Tibial artery (tissue), 4 donors: ENCODE measurements at regions of chr10 and their contacts with region 1.

Region 1: DNA sequence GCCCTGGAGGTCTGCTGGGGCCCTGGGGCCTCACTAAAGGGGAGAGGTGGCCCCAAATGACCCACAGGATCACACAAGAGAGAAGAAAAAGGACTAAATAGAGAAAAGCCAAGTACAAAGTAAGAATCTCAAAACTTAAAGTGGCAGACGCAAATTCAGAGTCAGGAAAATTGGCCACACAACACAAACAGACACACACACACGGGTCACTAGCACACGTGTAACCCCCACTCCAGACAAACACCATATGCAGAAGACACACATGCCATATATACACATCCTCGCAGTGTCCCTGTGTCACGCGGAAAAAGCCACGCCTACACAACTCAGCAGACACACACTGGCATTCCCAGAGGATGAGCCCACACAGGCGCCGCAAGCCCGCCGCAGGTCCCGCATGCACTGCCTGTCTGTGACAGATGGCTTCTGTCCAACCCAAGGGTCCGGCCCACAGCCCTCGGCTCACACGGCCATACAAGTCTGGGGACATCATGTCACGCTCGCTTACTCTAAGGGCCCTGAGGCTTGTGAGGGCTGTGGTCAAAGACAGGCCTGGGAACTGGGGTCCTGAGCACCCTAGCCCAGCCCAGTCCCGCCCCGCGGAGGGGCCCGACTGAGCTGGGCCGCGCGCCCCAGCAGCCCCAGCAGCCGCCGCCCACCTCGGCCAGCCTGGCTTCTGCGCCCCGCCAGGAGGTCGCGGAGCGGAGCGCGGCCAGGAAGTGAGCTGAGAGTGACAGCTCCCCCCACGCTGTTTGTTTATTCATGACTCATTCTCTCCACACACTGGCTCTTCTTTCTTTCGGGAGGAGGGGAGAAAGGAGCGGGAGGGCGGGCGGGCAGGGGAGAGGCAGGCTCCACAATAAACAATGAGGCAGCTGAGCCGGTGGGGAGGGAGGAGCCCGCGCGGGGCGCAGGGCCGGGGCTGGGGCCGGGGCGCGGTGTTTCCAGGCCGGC is 95.5 kb upstream of the ZMIZ1 start:
- DNase-seq: peak; percentile 80 to 92
- H3K4me3 ChIP-seq: peak overlapping the region; percentile 56 to 65
- H3K27ac ChIP-seq: peak overlapping the region; percentile 97 to 100
- H3K4me1 ChIP-seq: peaks cover 7 to 32% (median 24%) of the 10 kb centered on the region in 4 donors
- H3K27me3 ChIP-seq: no peaks in the 10 kb centered on the region
- CTCF ChIP-seq: no peak

Region 2: DNA sequence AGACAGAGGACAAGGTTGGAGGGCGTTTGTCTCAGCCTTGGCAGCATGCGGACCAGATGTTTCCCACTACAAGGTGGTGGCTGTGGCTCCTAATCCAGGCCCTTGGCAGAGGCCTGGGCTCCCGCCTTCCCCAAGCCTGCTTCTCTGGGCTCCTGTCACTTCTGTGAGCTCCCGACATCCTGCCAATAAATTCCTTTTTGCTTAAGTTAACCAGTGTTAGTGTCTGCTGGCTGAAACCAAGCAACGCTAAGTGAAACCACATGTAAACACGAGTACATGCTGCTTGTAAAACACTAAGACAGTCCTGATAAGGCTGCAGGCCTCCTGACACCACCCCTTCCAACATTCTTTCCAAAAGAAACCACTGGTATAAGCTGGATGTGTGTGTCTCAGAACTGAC is 168.0 kb before region 1 on chr10:
- intact Hi-C with region 1: loop called (anchors 10 kb)
- DNase-seq: peak; percentile 74 to 84
- H3K4me3 ChIP-seq: no peak overlapping the region
- H3K27ac ChIP-seq: peak overlapping the region; percentile 74 to 87
- H3K4me1 ChIP-seq: peaks cover 0 to 52% (median 30%) of the 10 kb centered on the region in 4 donors
- H3K27me3 ChIP-seq: no peaks in the 10 kb centered on the region
- CTCF ChIP-seq: no peak

Region 3: GRCh38 chr10:79068562-79069324 is 95.5 kb after region 1 on chr10 and contains the start of gene ZMIZ1:
- intact Hi-C with region 1: loop called (anchors 2 kb)
- DNase-seq: peak; percentile 94 to 95
- H3K4me3 ChIP-seq: peak within 1 kb of the TSS; percentile 70 to 95
- H3K27ac ChIP-seq: peak within 1 kb of the TSS; percentile 97 to 100
- H3K4me1 ChIP-seq: peaks cover 9 to 49% (median 37%) of the 10 kb centered on the region in 4 donors
- H3K27me3 ChIP-seq: no peaks in the 10 kb centered on the region
- CTCF ChIP-seq: peak; percentile 2 to 24

Region 4: GRCh38 chr10:79079490-79080355 is 106.5 kb after region 1 on chr10:
- intact Hi-C with region 1: no loop called
- DNase-seq: peak; percentile 68 to 77
- H3K4me3 ChIP-seq: no peak overlapping the region
- H3K27ac ChIP-seq: peak overlapping the region; percentile 52 to 53
- H3K4me1 ChIP-seq: peaks cover 15 to 98% (median 73%) of the 10 kb centered on the region in 4 donors
- H3K27me3 ChIP-seq: no peaks in the 10 kb centered on the region
- CTCF ChIP-seq: no peak

Region 5: DNA sequence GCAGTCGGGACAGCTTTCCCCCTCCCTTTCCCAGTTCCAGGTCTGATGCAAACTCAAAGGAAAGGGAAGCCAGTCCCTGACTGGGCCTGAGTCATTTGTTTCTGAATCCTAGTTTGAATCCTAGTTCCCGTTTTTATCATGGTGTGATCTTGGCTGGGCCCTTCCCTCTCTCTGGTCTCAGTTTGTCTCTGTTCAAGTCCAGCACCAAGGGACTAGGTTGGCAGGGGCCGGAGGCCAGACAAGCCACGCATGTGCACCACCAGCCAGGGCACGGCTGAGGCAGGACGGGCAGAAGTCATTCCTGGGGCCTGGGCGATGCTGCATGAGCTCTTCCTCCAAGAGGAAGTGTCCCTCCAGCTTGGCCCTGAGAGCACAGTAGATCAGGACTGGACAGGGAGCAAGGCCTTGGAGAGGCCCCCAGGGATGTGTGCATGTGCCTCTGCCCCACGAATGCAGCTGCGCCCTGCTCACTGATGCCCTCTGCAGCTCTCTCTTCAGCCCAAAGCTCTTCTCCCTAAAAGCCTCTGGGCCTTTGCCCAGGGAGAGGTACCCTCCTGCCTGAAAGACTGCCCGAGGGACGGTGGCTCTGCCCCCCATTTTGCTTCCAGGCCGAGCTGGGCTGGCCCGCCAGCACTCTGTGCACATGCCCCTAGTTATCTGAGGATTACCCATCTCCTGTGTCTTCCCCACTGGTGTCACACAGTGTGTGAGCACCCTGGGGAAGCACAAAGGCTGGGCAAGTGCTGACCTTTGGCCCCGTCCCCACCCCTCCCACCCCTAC is 182.3 kb after region 1 on chr10:
- intact Hi-C with region 1: loop called (anchors 5 kb)
- DNase-seq: peak; percentile 72 to 84
- H3K4me3 ChIP-seq: no peak overlapping the region
- H3K27ac ChIP-seq: peak overlapping the region; percentile 79 to 80
- H3K4me1 ChIP-seq: peaks cover 15 to 100% (median 93%) of the 10 kb centered on the region in 4 donors
- H3K27me3 ChIP-seq: no peaks in the 10 kb centered on the region
- CTCF ChIP-seq: peak in 1 of 2 experiments; percentile 6